GM10248 (cell line): ENCODE measurements at regions of chr9 and their contacts with region 1.

Region 1: DNA sequence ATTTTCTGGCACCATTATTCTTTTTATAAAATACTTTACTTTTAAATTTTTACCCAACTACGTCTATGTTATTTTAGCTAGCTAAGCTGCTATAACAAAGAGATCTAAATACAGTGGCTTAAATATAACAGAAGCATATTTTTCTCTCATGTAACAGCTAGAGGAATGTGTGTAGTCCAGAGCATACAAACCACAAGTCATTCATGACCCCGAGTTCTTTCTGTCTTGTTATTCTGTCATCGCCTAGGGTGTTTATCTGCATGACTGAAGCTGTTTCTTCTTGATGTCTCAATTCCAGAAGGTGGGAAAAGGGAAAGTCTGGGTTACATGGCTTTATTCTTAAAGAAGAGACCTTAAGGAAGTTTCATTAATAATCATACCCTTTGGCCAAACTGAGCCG is 136.9 kb upstream of the RFX3 start:
- DNase-seq: no peak
- CTCF ChIP-seq: no peak

Region 2: GRCh38 chr9:3674596-3674995 is 11.9 kb after region 1 on chr9:
- CTCF ChIA-PET with region 1: interaction called, 28 read pairs
- POLR2A ChIA-PET with region 1: no interaction called
- DNase-seq: no peak
- CTCF ChIP-seq: no peak